Calu3 (cell line): ENCODE measurements at regions of chr6 and their contacts with region 1.

Region 1: GRCh38 chr6:28080631-28081485 is 490 bp downstream of the ZNF165 start:
- DNase-seq: peak; percentile 94
- H3K4me3 Mint-ChIP-seq: peak overlapping the region; percentile 73
- H3K27ac Mint-ChIP-seq: peak overlapping the region; percentile 96
- H3K4me1 Mint-ChIP-seq: peaks cover 19% of the 10 kb centered on the region
- H3K27me3 Mint-ChIP-seq: no peaks in the 10 kb centered on the region
- CTCF ChIP-seq: no peak

Region 2: GRCh38 chr6:27495386-27496135 is 585.3 kb before region 1 on chr6:
- CTCF ChIA-PET with region 1: no interaction called
- intact Hi-C with region 1: no loop called
- DNase-seq: peak; percentile 82
- H3K4me3 Mint-ChIP-seq: peak overlapping the region; percentile 86
- H3K27ac Mint-ChIP-seq: peak overlapping the region; percentile 89
- H3K4me1 Mint-ChIP-seq: peaks cover 24% of the 10 kb centered on the region
- H3K27me3 Mint-ChIP-seq: no peaks in the 10 kb centered on the region
- CTCF ChIP-seq: no peak

Region 3: GRCh38 chr6:28104392-28105244 is 23.8 kb after region 1 on chr6:
- CTCF ChIA-PET with region 1: no interaction called
- intact Hi-C with region 1: loop called (anchors 2 kb)
- DNase-seq: peak; percentile 90
- H3K4me3 Mint-ChIP-seq: peak overlapping the region; percentile 79
- H3K27ac Mint-ChIP-seq: peak overlapping the region; percentile 76
- H3K4me1 Mint-ChIP-seq: no peaks in the 10 kb centered on the region
- H3K27me3 Mint-ChIP-seq: peaks cover 26% of the 10 kb centered on the region
- CTCF ChIP-seq: peak; percentile 88

Region 4: GRCh38 chr6:28615955-28616747 is 535.3 kb after region 1 on chr6:
- CTCF ChIA-PET with region 1: no interaction called
- intact Hi-C with region 1: no loop called
- DNase-seq: no peak
- H3K4me3 Mint-ChIP-seq: no peak overlapping the region
- H3K27ac Mint-ChIP-seq: no peak overlapping the region
- H3K4me1 Mint-ChIP-seq: no peaks in the 10 kb centered on the region
- H3K27me3 Mint-ChIP-seq: peaks cover 22% of the 10 kb centered on the region
- CTCF ChIP-seq: no peak